Sigmoid colon (tissue), 7 donors: ENCODE measurements at regions of chr4 and their contacts with region 1.

Region 1: DNA sequence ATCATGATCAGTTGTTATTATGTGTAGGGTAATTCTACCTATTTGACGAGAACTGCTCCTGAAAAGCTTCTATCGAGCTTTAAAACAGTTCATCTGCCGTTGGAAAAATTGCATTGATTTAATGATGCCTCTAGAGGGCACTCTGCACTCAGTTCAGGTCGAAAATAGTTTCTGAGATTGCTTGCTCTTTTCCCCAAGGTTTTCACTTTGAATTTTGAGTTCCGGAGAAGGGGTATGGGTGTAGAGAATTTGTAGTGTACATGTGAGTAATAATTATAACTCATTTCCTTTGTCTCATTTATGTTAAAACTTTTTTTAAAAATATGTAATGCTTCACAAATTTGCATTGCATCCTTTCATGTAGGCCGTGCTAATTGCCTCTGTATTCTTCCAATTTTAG is 28.4 kb upstream of the TNIP3 start:
- DNase-seq: no peak
- H3K4me3 ChIP-seq: no peak overlapping the region
- H3K27ac ChIP-seq: no peak overlapping the region
- H3K4me1 ChIP-seq: no peaks in the 10 kb centered on the region
- H3K27me3 ChIP-seq: no peaks in the 10 kb centered on the region
- CTCF ChIP-seq: peak in 3 of 4 experiments; percentile 36 to 60 (median 52)
- EP300 ChIP-seq: no peak
- POLR2A ChIP-seq: no peak

Region 2: DNA sequence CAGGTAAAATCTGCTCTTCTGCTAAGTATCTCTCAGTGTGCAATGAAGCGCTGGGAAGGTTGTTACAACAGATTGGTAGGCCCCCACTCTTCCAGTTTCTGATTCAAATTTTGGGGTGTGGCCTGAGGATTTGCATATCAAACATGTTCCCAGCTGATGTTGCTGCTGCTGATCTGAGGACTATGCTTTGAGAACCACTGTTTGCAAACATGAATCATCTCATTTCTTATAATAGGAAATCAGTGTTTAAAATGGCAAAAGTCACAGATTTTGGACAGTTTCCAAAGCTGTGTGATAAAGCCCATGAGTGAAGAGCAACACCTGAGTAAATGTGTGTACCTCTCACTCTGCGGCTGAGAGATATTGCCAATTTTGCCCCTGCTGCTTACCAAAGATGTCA is 83.9 kb before region 1 on chr4:
- intact Hi-C with region 1: no loop called
- DNase-seq: no peak
- H3K4me3 ChIP-seq: no peak overlapping the region
- H3K27ac ChIP-seq: no peak overlapping the region
- H3K4me1 ChIP-seq: no peaks in the 10 kb centered on the region
- H3K27me3 ChIP-seq: no peaks in the 10 kb centered on the region
- CTCF ChIP-seq: no peak
- EP300 ChIP-seq: no peak
- POLR2A ChIP-seq: no peak

Region 3: GRCh38 chr4:121736735-121737351 is 544.4 kb after region 1 on chr4:
- intact Hi-C with region 1: loop called (anchors 10 kb)
- DNase-seq: no peak
- H3K4me3 ChIP-seq: no peak overlapping the region
- H3K27ac ChIP-seq: no peak overlapping the region
- H3K4me1 ChIP-seq: peaks cover 0 to 7% (median 0%) of the 10 kb centered on the region in 4 donors
- H3K27me3 ChIP-seq: no peaks in the 10 kb centered on the region
- CTCF ChIP-seq: peak in 3 of 4 experiments; percentile 29 to 48 (median 37)
- EP300 ChIP-seq: no peak
- POLR2A ChIP-seq: no peak